ENCODE measurements at regions of chr14 and their contacts with region 1.

Region 1: DNA sequence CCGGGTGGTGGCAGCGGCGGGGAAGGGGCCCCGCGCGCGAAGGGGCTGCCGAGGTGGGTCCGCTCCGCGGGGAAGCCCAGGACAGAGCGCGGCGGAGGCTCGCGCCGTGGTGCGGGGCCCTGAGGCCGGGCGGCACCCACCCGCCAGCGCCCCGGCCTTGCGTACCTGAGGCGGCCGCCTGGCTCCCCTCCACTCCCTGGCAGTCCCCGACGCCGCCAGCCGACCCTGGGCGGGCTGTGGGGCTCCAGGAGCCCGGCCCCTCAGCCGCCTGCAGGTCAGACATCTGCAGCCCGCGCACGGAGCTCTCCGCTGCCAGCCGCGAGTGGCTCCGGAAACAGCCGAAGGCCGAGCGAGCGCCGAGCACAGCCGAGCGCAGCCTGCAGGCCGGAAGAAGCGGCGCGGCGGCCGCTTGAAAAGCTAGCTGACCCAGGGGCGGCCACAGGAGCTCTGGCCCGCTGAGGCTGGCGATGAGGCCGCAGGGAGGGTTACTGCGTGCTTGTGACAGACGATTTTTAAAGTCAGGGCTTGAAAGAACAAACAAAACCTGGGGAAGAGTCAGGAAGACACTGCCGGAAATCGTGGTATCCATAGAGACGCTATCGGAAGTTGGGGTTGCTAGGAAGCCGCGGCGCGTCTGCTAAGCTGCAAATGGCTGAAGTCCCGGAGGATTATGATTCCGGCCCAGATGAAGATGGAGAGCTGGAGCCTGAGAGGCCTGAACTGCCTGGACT is at the starts of genes SAMD15 and TMED8:
- DNase-seq: peak; percentile 91
- ATAC-seq: peak; percentile 95
- H3K4me3 Mint-ChIP-seq: no peak within 1 kb of the TSS
- H3K27ac Mint-ChIP-seq: peak within 1 kb of the TSS; percentile 86
- H3K4me1 Mint-ChIP-seq: peaks cover 40% of the 10 kb centered on the region
- H3K27me3 Mint-ChIP-seq: no peaks in the 10 kb centered on the region
- total RNA-seq, gene SAMD15: 0.25 TPM
- total RNA-seq, gene TMED8: 25.3 to 27.9 TPM

Region 2: DNA sequence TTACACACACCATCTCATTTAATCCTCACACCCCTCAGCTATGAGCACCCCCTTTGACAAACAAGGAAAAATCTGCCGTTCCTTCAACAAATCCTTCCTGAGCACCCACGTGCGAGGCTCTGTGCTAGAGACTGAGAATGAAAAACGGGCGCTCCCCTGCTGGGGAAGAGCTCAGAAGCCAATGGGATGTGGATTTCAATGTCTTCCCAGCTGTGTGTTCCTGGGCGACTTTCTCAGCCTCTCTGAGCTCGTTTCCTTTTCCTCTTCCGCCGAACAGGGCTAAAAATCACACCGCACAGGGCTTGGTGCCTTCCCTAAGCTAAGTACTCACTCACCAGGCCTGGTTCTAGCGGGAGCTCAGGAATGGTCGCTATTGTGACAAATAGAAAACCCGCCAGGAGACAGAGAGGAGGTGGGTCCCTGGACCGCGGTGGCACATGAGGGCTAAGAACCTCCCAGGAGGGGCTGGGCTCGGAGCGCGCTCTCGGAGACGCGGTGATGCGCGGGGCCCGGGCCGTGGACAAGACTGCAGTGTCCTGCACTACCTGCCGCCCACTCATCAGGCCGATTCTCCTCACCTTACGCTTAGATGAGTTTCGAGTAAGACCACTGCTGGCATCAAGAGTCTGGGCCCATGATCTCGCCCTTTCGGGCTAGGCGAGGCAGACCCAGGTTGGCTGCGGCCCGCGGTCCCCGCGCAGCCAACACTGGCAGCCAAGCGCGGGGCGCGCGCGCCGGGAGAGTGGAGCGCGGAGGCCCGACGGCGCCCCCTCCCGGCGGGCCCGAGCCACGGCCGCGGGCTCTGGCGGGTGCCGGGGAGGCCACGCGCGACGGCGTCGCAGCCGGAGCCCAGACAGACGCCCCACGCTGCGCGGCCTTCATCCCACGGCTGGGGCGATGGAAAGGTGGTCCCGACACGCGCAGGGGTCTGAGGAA is 252.3 kb before region 1 on chr14:
- CTCF ChIA-PET with region 1: no interaction called
- POLR2A ChIA-PET with region 1: no interaction called
- intact Hi-C with region 1: no loop called
- DNase-seq: peak; percentile 77
- ATAC-seq: peak; percentile 77
- H3K4me3 Mint-ChIP-seq: peak overlapping the region; percentile 68
- H3K27ac Mint-ChIP-seq: peak overlapping the region; percentile 55
- H3K4me1 Mint-ChIP-seq: peaks cover 37% of the 10 kb centered on the region
- H3K27me3 Mint-ChIP-seq: peaks cover 9% of the 10 kb centered on the region

Region 3: DNA sequence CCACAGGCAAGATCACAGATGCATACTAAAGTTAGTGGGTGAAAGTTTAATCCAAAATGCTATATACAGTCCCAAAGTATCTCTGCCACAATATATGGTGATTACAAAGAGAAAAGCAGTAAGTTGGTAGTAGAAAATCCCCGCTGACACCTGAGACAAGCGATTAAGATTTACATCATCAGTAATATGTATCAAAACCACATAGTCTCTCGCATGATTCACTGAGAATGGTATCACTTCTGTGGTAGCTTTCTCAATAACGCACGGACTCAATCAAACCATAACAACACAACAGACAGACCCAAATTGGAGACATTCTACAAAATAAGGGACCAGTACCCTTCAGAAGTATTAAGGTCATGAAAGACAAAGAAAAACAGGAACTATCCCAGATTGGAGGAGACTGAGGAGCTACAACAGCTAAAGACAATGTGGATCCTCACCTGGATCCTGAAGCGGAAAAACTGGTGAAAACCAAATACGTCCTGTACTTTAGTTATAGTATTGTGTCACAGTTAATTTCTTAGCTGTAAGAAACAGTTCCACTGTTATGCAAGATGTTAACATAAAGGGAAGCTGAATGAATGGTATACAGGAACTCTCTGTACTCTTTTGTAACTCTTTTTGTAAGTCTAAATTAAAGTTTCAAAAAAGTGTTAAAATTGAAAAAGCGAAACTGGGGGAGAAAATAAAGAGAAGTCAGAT is 188.5 kb after region 1 on chr14:
- CTCF ChIA-PET with region 1: no interaction called
- POLR2A ChIA-PET with region 1: no interaction called
- intact Hi-C with region 1: no loop called
- DNase-seq: no peak
- ATAC-seq: peak; percentile 93
- H3K4me3 Mint-ChIP-seq: no peak overlapping the region
- H3K27ac Mint-ChIP-seq: peak overlapping the region; percentile 63
- H3K4me1 Mint-ChIP-seq: peaks cover 14% of the 10 kb centered on the region
- H3K27me3 Mint-ChIP-seq: no peaks in the 10 kb centered on the region

Region 4: DNA sequence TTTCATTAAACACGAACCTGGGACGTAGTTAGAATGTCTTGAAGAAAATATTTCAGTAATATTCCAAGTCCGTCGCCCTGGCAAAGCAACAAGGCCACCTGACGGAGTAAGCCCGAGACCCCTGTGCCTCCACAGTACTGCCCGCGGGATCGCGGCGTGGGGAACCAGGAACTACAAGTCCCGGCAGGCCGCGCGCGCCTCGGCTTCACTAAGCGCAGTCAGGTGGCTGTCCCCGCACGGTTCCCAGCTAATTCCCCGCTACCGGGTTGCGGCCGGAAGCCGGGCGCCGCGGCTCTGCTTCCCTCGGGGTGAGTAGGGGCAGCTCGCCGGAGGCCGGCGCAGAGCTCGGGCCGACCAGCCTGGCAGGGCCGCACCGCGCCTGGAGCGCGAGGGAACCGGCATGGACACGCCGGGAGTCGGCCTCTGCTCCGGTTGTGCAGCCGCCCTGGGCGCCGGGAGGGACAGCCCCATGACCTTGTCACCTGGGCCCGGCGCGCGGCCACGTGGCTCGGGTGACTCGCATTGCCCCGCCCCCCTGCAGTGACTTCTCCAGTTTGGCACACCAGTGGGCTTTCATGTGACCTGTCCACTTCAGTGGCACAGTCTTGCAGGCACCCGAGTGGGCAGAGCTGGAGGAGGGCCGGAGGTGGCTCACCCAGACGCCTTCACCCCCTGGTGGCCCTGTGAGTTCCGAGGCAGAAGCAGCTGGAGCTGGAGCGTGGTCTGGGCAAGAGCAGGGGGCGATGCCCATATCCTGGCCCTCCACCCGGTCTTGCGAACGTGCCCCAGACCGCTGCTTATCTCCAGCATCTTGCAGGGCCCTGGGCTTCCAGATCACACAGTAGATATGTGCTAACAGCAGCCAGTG is 423.2 kb after region 1 on chr14 and contains the start of gene ADCK1:
- CTCF ChIA-PET with region 1: no interaction called
- POLR2A ChIA-PET with region 1: interaction called, 5 read pairs
- intact Hi-C with region 1: loop called in 1 of 2 experiments (anchors 1 kb)
- DNase-seq: peak; percentile 94
- ATAC-seq: peak; percentile 94
- H3K4me3 Mint-ChIP-seq: peak within 1 kb of the TSS; percentile 83
- H3K27ac Mint-ChIP-seq: peak within 1 kb of the TSS; percentile 87
- H3K4me1 Mint-ChIP-seq: peaks cover 11% of the 10 kb centered on the region
- H3K27me3 Mint-ChIP-seq: no peaks in the 10 kb centered on the region
- total RNA-seq, gene ADCK1: 4.6 to 4.9 TPM

Measured in activated CD4-positive, alpha-beta T cell treated with anti-CD3 and anti-CD28 coated beads for 36 hours (primary cell).